Activated CD8-positive, alpha-beta T cell treated with anti-CD3 and anti-CD28 coated beads for 36 hours (primary cell): ENCODE measurements at regions of chr19 and their contacts with region 1.

Region 1: GRCh38 chr19:41883821-41884733 is 1.1 kb downstream of the ARHGEF1 start:
- DNase-seq: peak; percentile 94
- ATAC-seq: peak; percentile 73
- H3K4me3 Mint-ChIP-seq: peak overlapping the region; percentile 73
- H3K27ac Mint-ChIP-seq: peak overlapping the region; percentile 94
- H3K4me1 Mint-ChIP-seq: peaks cover 50% of the 10 kb centered on the region
- H3K27me3 Mint-ChIP-seq: no peaks in the 10 kb centered on the region
- CTCF ChIP-seq: no peak

Region 2: GRCh38 chr19:41904118-41904870 is 20.2 kb after region 1 on chr19:
- CTCF ChIA-PET with region 1: interaction called, 5 read pairs
- POLR2A ChIA-PET with region 1: interaction called, 12 read pairs
- intact Hi-C with region 1: no loop called
- DNase-seq: no peak
- ATAC-seq: no peak
- H3K4me3 Mint-ChIP-seq: no peak overlapping the region
- H3K27ac Mint-ChIP-seq: peak overlapping the region; percentile 48
- H3K4me1 Mint-ChIP-seq: peaks cover 47% of the 10 kb centered on the region
- H3K27me3 Mint-ChIP-seq: no peaks in the 10 kb centered on the region
- CTCF ChIP-seq: no peak

Region 3: DNA sequence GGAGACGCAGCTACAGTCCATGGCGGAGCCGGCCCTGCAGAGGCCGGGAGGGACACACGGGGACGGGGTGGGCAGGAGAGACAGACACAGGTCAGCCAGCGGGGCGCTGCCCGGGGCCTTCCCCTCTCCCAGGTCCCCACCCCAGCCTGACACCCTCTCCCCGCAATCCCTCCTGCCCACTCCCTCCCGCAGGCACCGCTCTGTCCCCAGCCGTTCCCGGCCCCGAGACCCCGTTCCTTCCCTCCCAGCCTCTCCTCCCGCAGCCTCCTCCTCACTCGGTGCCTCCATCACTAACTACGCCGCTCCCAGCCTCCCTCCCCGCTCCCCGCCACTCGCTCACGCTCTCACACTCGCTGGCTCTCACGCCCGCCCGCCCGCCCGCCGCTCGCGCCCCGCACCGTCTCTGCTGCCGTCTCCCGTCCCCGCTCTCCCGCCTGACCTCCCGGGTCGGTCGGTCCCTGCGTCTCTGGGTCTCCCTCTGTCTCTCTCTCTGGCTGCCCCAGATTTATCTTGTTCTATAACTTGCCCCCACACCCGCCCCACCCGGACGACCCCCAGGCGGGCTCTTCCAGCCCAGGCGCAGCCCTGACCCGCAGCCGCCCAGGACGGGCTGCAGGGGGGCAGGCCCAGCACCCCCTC is 28.9 kb after region 1 on chr19:
- CTCF ChIA-PET with region 1: interaction called, 3 read pairs
- POLR2A ChIA-PET with region 1: interaction called, 23 read pairs
- intact Hi-C with region 1: no loop called
- DNase-seq: no peak
- ATAC-seq: peak; percentile 25
- H3K4me3 Mint-ChIP-seq: no peak overlapping the region
- H3K27ac Mint-ChIP-seq: no peak overlapping the region
- H3K4me1 Mint-ChIP-seq: peaks cover 36% of the 10 kb centered on the region
- H3K27me3 Mint-ChIP-seq: peaks cover 20% of the 10 kb centered on the region
- CTCF ChIP-seq: no peak

Region 4: GRCh38 chr19:41951686-41952172 is 67.7 kb after region 1 on chr19:
- CTCF ChIA-PET with region 1: interaction called, 34 read pairs
- POLR2A ChIA-PET with region 1: interaction called, 78 read pairs
- intact Hi-C with region 1: loop called (anchors 5 kb)
- DNase-seq: peak; percentile 94
- ATAC-seq: peak; percentile 96
- H3K4me3 Mint-ChIP-seq: no peak overlapping the region
- H3K27ac Mint-ChIP-seq: peak overlapping the region; percentile 58
- H3K4me1 Mint-ChIP-seq: peaks cover 28% of the 10 kb centered on the region
- H3K27me3 Mint-ChIP-seq: no peaks in the 10 kb centered on the region
- CTCF ChIP-seq: peak; percentile 100